Transverse colon (tissue), 4 donors: ENCODE measurements at regions of chr9 and their contacts with region 1.

Region 1: GRCh38 chr9:15763371-15763770 is 210.5 kb downstream of the CCDC171 start:
- DNase-seq: no peak
- H3K4me3 ChIP-seq: no peak overlapping the region
- H3K27ac ChIP-seq: no peak overlapping the region
- H3K4me1 ChIP-seq: no peaks in the 10 kb centered on the region
- H3K27me3 ChIP-seq: no peaks in the 10 kb centered on the region
- CTCF ChIP-seq: no peak
- EP300 ChIP-seq: no peak
- POLR2A ChIP-seq: no peak

Region 2: GRCh38 chr9:15813076-15813475 is 49.7 kb after region 1 on chr9:
- in situ Hi-C with region 1: no loop called
- intact Hi-C with region 1: no loop called
- DNase-seq: no peak
- H3K4me3 ChIP-seq: no peak overlapping the region
- H3K27ac ChIP-seq: no peak overlapping the region
- H3K4me1 ChIP-seq: no peaks in the 10 kb centered on the region
- H3K27me3 ChIP-seq: no peaks in the 10 kb centered on the region
- CTCF ChIP-seq: no peak
- EP300 ChIP-seq: no peak
- POLR2A ChIP-seq: no peak

Region 3: GRCh38 chr9:15824310-15824709 is 60.9 kb after region 1 on chr9:
- in situ Hi-C with region 1: loop called in 1 of 4 experiments (anchors 10 kb)
- intact Hi-C with region 1: no loop called
- DNase-seq: no peak
- H3K4me3 ChIP-seq: no peak overlapping the region
- H3K27ac ChIP-seq: no peak overlapping the region
- H3K4me1 ChIP-seq: no peaks in the 10 kb centered on the region
- H3K27me3 ChIP-seq: no peaks in the 10 kb centered on the region
- CTCF ChIP-seq: no peak
- EP300 ChIP-seq: no peak
- POLR2A ChIP-seq: no peak

Region 4: DNA sequence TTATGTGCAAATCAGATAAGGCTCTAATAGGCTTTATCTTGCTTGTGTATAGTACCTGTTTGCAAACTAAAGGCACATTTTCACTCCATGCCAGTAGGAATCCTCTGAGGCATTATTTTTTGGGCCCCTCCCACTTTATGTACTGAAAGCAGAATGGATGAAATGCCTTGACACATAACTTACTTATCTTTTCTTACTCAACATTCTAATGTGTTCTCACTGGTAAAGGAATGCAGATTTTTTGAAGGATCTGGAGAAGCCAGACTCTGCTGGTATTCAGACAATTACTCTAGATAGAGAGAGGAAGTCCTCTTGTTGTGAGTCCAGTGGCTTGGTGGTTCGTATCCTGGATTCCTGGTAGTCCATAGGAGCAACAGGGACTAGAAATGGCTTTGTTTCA is 126.2 kb after region 1 on chr9:
- in situ Hi-C with region 1: no loop called
- intact Hi-C with region 1: no loop called
- DNase-seq: no peak
- H3K4me3 ChIP-seq: no peak overlapping the region
- H3K27ac ChIP-seq: no peak overlapping the region
- H3K4me1 ChIP-seq: no peaks in the 10 kb centered on the region
- H3K27me3 ChIP-seq: no peaks in the 10 kb centered on the region
- CTCF ChIP-seq: no peak
- EP300 ChIP-seq: no peak
- POLR2A ChIP-seq: no peak